Posterior cingulate gyrus (tissue), 11 donors: ENCODE measurements at regions of chrX and their contacts with region 1.

Region 1: GRCh38 chrX:140057001-140057411 is 91.7 kb upstream of the CXorf66 start:
- DNase-seq: peak; percentile 37 to 95 (median 76)

Region 2: DNA sequence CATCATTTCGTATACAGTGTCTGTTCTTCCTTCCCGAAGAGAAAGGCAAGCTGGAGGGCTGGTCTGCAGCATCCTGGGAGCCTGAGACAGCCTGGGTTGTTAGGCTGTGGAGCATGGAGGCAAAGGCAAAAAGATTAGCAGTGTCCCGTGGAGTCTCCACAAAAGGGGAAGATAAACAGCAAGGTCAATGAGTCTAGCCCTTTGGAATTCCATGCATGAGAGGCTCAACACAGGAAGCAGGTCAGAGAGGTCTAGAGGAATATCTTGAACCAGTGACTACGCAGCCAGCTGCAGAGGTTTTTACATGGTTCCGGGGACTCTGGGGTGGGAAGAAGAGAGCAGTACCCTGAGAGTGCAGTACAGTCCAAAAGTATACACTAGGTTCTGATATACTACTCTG is 336.9 kb before region 1 on chrX:
- intact Hi-C with region 1: no loop called
- DNase-seq: no peak

Region 3: GRCh38 chrX:139949698-139950097 is 107.3 kb before region 1 on chrX:
- intact Hi-C with region 1: no loop called
- DNase-seq: no peak

Region 4: DNA sequence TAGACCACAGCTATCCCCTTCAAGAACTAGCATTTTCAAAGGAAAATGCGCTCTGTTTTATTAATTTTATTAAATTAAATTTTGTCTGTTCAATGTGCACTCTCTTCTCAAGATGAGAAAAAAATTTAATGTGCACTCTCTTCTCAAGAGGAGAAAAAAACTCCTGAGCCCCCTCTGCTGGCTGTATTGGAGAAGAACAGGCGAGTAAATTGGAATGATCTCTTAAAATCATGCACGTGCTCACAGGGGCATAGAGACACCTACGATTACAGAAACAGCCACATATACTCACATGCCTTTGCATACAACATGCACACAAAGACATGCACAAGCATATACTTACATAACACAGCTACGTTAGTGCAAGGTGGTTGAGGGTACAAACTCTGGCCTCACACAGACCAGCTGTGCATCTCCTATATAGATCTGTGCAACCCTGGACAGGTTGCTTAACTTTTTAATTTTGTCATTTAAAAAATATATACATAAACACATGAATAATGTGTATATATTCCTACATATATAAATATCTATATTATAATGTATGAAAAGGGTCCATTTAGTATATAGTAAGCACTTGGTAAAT is 84.5 kb after region 1 on chrX:
- intact Hi-C with region 1: loop called (anchors 1 kb)
- DNase-seq: peak in 4 of 10 donors; percentile 11 to 42 (median 26)

Region 5: GRCh38 chrX:140503714-140504351 is 446.8 kb after region 1 on chrX:
- intact Hi-C with region 1: loop called (anchors 10 kb)
- DNase-seq: peak in 3 of 10 donors; percentile 59 to 88 (median 74)

Region 6: DNA sequence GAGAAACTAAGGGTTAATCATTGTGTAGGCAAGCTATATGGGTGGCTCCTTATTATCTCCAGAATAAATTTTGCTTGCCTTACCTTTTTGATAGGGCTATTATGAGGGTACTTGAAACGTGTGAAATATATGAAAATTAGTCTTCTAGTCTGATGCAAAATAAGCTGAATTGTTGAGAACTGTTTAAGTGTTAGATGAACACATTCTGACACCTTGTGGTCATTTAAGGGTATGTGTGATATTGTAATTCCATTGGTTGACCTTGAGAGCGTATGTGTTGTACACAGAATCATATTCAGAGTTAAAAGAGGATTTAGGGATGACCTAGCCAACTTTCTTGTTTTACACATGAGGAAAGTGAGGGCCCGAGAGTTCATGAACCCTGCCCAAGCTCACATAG is 607.9 kb after region 1 on chrX:
- intact Hi-C with region 1: loop called (anchors 2 kb)
- DNase-seq: no peak